Mammary epithelial cell (primary cell): ENCODE measurements at regions of chr2 and their contacts with region 1.

Region 1: GRCh38 chr2:43611987-43612894 is 16.4 kb upstream of the THADA start:
- DNase-seq: peak; percentile 58
- H3K4me3 ChIP-seq: no peak overlapping the region
- H3K27ac ChIP-seq: no peak overlapping the region
- H3K4me1 ChIP-seq: no peaks in the 10 kb centered on the region
- H3K27me3 ChIP-seq: no peaks in the 10 kb centered on the region
- CTCF ChIP-seq: peak; percentile 77 to 87

Region 2: DNA sequence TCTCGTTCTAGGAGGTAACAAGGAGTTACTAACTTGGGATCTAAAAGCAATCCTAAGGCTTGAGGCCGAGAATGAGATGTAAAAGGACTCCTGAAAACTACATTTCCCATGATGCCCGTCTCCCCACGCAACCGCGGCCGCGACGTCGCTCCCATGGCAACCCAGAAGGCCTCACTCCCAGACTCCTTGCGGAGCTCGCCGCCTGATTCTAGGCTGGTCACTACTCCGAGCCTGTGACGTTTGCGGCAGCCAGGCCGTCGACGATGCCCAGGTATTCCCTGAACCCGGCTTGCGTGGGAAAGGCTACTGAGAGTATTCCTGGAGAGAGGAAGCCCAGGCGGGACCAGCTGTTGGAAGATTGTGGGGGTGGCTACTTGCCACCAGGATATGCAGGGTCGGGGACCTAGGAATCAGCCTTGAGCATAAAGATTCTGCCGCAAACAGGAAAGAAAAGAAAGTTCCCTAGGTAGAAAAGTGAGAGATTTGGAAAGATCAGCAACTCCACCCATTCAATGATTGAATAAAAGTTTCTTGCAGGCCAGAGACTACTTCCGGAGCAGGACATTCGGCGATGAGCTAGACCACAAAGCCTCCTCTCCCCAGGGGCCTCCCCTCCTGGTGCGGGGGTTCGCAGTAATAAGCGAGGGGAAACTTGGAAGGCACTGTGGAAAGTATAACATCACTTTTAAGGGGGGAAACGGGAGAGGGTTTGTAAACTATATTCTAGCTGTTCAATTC is 161.8 kb after region 1 on chr2 and contains the start of gene DYNC2LI1:
- CTCF ChIA-PET with region 1: no interaction called
- dilution Hi-C with region 1: no loop called
- in situ Hi-C with region 1: loop called in 1 of 2 experiments (anchors 25 kb)
- intact Hi-C with region 1: loop called (anchors 5 kb)
- DNase-seq: peak; percentile 89
- H3K4me3 ChIP-seq: peak within 1 kb of the TSS; percentile 63 to 80 (median 74)
- H3K27ac ChIP-seq: peak within 1 kb of the TSS; percentile 88
- H3K4me1 ChIP-seq: no peaks in the 10 kb centered on the region
- H3K27me3 ChIP-seq: no peaks in the 10 kb centered on the region
- CTCF ChIP-seq: no peak
- total RNA-seq, gene DYNC2LI1: 15.6 to 16.2 TPM

Region 3: GRCh38 chr2:43798300-43798699 is 186.1 kb after region 1 on chr2:
- CTCF ChIA-PET with region 1: no interaction called
- dilution Hi-C with region 1: no loop called
- in situ Hi-C with region 1: no loop called
- intact Hi-C with region 1: loop called (anchors 1 kb)
- DNase-seq: no peak
- H3K4me3 ChIP-seq: no peak overlapping the region
- H3K27ac ChIP-seq: no peak overlapping the region
- H3K4me1 ChIP-seq: no peaks in the 10 kb centered on the region
- H3K27me3 ChIP-seq: no peaks in the 10 kb centered on the region
- CTCF ChIP-seq: peak; percentile 26 to 33

Region 4: GRCh38 chr2:43877782-43878464 is 265.7 kb after region 1 on chr2:
- CTCF ChIA-PET with region 1: no interaction called
- dilution Hi-C with region 1: no loop called
- in situ Hi-C with region 1: loop called in 1 of 2 experiments (anchors 10 kb)
- intact Hi-C with region 1: loop called (anchors 2 kb)
- DNase-seq: peak; percentile 29
- H3K4me3 ChIP-seq: no peak overlapping the region
- H3K27ac ChIP-seq: no peak overlapping the region
- H3K4me1 ChIP-seq: no peaks in the 10 kb centered on the region
- H3K27me3 ChIP-seq: no peaks in the 10 kb centered on the region
- CTCF ChIP-seq: peak; percentile 92 to 99